Heart right ventricle (tissue), 16 donors: ENCODE measurements at regions of chr1 and their contacts with region 1.

Region 1: DNA sequence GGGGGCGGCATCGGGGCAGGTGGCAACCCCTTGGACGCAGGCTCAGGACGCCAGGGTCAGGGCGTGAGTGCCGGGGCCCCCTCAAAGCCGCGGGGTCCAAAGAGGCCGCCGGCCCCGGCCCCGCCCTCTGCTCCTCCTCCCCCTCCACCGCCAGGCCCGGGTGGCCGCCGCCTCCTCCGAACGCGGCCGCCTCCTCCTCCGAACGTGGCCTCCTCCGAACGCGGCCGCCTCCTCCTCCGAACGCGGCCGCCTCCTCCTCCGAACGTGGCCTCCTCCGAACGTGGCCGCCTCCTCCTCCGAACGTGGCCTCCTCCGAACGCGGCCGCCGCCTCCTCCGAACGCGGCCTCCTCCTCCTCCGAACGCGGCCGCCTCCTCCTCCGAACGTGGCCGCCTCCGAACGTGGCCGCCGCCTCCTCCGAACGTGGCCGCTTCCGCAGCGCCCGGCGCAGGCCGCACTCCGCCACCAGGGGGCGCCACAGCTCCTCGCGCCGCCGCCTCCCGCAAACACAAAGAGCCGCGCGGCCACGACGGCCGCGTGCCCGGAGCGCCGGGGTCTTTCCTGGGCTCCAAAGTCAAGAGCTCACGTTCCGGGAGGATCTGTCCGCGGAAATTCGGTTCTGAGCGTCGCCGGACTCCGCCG is 19.3 kb upstream of the SAMD11 start:
- DNase-seq: peak; percentile 68 to 85
- ATAC-seq: peak; percentile 66 to 93 (median 85)
- H3K4me3 ChIP-seq: peak overlapping the region in 9 of 10 donors; percentile 30 to 54 (median 48)
- H3K27ac ChIP-seq: peak overlapping the region in 3 of 10 donors; percentile 26 to 60 (median 31)
- H3K4me1 ChIP-seq: peaks cover 3 to 34% (median 11%) of the 10 kb centered on the region in 9 donors
- H3K27me3 ChIP-seq: peaks cover 0 to 38% (median 21%) of the 10 kb centered on the region in 7 donors
- CTCF ChIP-seq: peak; percentile 87 to 99 (median 92)

Region 2: GRCh38 chr1:941588-942383 is 37.4 kb after region 1 on chr1:
- intact Hi-C with region 1: loop called in 2 of 10 experiments (anchors 2 to 5 kb)
- DNase-seq: peak; percentile 67 to 71
- ATAC-seq: peak in 7 of 8 donors; percentile 25 to 51 (median 45)
- H3K4me3 ChIP-seq: peak overlapping the region; percentile 4 to 51 (median 46)
- H3K27ac ChIP-seq: peak overlapping the region in 7 of 10 donors; percentile 45 to 87 (median 69)
- H3K4me1 ChIP-seq: peaks cover 3 to 55% (median 33%) of the 10 kb centered on the region in 9 donors
- H3K27me3 ChIP-seq: peaks cover 11 to 69% (median 58%) of the 10 kb centered on the region in 7 donors
- CTCF ChIP-seq: no peak

Region 3: DNA sequence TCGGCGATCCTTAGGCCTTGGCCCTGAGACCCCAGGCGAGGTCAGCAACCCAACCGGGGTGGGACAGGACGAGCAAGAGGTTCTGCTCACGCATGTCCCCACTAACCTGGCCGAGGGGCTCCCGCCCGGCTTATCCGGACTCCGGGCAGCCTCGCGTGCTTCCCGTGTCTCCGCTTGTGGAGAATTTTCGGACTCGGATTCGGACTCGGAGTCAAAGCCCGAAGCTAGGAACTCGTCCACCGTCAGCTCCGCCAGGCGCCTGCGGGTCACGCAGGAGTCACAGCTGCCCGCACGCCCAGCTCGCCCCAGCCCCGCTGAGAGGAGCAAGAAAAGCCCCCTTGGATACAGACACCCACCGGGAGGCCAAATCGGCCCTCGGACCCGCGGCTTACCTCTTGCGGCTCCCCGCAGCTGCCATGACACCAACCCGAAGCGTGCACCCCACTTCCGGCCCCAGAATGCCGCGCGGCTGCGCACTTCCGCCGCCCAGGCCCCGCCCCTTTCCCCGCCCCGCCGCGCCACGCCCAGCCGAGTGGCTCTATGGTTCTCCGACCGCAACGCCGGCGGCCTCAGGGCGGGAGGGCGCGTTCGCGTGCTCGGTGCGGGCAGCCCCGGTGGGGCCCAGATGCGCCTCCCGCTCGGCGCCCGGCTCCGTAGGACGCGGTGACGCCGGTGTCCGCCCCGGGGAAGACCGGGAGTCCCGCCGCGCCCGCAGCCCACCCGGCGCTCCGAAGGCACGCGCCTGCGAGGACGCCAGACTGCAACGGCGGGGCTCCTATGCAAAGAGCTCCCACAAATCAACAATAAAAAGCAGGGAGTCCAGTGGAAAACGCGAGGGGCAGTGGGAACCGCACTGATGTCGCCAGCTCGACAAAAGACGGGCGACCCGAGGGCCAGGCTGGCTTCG is 54.6 kb after region 1 on chr1 and contains the start of gene NOC2L:
- intact Hi-C with region 1: loop called in 4 of 10 experiments (anchors 5 to 10 kb)
- DNase-seq: peak; percentile 93 to 96
- ATAC-seq: peak; percentile 89 to 97 (median 96)
- H3K4me3 ChIP-seq: peak within 1 kb of the TSS; percentile 79 to 100 (median 97)
- H3K27ac ChIP-seq: peak within 1 kb of the TSS in 9 of 10 donors; percentile 59 to 86 (median 69)
- H3K4me1 ChIP-seq: peaks cover 12 to 33% (median 23%) of the 10 kb centered on the region in 9 donors
- H3K27me3 ChIP-seq: peaks cover 0 to 4% (median 0%) of the 10 kb centered on the region in 7 donors
- CTCF ChIP-seq: peak in 1 of 9 donors; percentile 6
- total RNA-seq, gene NOC2L: 38.3 to 52.5 (median 42.6) TPM